WTC11 (cell line): ENCODE measurements at regions of chr2 and their contacts with region 1.

Region 1: GRCh38 chr2:16773080-16773713 is 107.6 kb upstream of the CYRIA start:
- DNase-seq: peak; percentile 45
- ATAC-seq: peak; percentile 76
- H3K4me3 Mint-ChIP-seq: no peak overlapping the region
- H3K27ac Mint-ChIP-seq: no peak overlapping the region
- H3K4me1 Mint-ChIP-seq: peaks cover 41% of the 10 kb centered on the region
- H3K27me3 Mint-ChIP-seq: no peaks in the 10 kb centered on the region
- CTCF ChIP-seq: peak; percentile 54; the same call in 1 of the 2 replicates

Region 2: DNA sequence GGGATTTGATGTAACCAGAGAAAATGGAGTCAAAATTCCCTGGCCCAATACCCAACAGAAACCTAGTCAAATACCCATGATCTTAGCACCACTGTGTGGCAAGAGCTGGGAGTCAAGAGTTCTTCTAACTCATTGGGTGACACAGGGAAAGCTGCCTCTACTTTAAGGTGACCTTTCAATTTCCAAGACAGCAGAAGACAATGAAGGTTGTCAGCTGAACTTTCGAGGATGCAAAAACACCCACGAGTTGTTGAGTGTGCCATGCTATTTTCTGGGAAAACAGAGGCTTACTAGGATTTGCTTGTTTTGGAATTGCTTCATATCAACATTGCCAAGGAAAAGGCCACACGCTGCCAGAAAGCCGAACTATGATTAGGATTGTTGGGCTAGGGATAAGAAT is 45.9 kb before region 1 on chr2:
- CTCF ChIA-PET with region 1: no interaction called
- POLR2A ChIA-PET with region 1: no interaction called
- DNase-seq: no peak
- ATAC-seq: no peak
- H3K4me3 Mint-ChIP-seq: no peak overlapping the region
- H3K27ac Mint-ChIP-seq: no peak overlapping the region
- H3K4me1 Mint-ChIP-seq: peaks cover 7% of the 10 kb centered on the region
- H3K27me3 Mint-ChIP-seq: no peaks in the 10 kb centered on the region
- CTCF ChIP-seq: no peak

Region 3: DNA sequence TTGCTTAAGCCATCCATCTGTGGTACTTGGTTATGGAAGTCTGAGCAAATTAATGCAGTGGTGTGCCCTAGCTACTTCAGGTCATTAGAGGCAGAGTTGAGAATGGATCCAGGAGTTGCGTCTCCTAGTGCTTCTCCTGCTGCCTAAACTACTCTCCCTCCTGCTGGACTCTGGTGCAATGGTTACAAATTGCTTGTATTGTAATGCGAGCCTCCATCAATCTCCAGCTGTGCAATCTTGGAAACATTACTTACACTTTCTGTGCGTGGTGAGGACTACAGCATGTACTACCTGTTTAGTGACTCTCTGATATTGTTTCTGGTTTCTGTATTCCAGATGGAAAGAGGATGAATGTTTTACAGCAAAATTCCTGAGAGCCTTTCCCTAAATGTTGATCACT is 11.5 kb after region 1 on chr2:
- CTCF ChIA-PET with region 1: interaction called, 10 read pairs
- POLR2A ChIA-PET with region 1: no interaction called
- DNase-seq: no peak
- ATAC-seq: peak; percentile 27; the same call in 1 of the 2 replicates
- H3K4me3 Mint-ChIP-seq: no peak overlapping the region
- H3K27ac Mint-ChIP-seq: no peak overlapping the region
- H3K4me1 Mint-ChIP-seq: peaks cover 20% of the 10 kb centered on the region
- H3K27me3 Mint-ChIP-seq: no peaks in the 10 kb centered on the region; the same call in 1 of the 2 replicates
- CTCF ChIP-seq: no peak

Region 4: DNA sequence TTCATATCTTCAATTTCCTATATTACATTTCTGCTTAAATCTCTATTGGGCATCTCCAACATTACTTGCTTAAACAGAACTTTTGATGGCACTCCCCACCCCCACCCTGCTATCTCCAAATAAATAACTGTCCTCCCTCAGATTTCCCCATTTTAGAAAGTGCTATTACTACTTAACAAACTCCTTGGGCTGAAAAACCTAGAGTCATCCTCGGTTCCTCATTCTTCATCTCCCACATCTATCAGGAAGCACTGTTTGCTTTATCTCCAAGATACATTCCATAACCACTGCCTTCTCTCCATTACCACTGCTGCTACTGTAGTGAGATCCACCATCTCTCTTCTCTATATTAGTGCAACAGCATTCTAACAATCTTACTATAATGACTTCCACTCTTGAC is 42.8 kb after region 1 on chr2:
- CTCF ChIA-PET with region 1: no interaction called
- POLR2A ChIA-PET with region 1: no interaction called
- DNase-seq: no peak
- ATAC-seq: no peak
- H3K4me3 Mint-ChIP-seq: no peak overlapping the region
- H3K27ac Mint-ChIP-seq: no peak overlapping the region
- H3K4me1 Mint-ChIP-seq: no peaks in the 10 kb centered on the region
- H3K27me3 Mint-ChIP-seq: no peaks in the 10 kb centered on the region
- CTCF ChIP-seq: no peak

Region 5: DNA sequence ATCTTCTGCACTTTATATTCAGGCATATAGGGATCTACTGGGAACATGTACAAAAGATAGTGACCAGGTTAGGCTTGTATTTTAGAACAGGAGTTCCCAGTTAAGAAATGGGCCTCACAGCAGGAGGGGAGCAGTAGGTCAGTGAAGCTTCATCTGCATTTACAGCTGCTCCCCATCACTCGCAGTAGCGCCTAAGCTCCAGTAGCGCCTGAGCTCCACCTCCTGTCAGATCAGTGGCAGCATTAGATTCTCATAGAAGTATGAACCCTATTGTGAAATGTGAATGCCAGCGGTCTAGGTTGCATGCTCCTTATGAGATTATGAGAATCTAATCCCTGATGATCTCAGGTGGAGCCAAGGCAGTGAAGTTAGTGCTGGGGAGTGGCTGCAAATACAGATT is 116.9 kb after region 1 on chr2:
- CTCF ChIA-PET with region 1: interaction called, 55 read pairs
- POLR2A ChIA-PET with region 1: no interaction called
- DNase-seq: peak; percentile 60
- ATAC-seq: peak; percentile 91
- H3K4me3 Mint-ChIP-seq: no peak overlapping the region
- H3K27ac Mint-ChIP-seq: no peak overlapping the region
- H3K4me1 Mint-ChIP-seq: peaks cover 9% of the 10 kb centered on the region; the same call in 1 of the 2 replicates
- H3K27me3 Mint-ChIP-seq: no peaks in the 10 kb centered on the region
- CTCF ChIP-seq: no peak

Region 6: GRCh38 chr2:16900405-16901025 is 127.3 kb after region 1 on chr2:
- CTCF ChIA-PET with region 1: interaction called, 13 read pairs
- POLR2A ChIA-PET with region 1: no interaction called
- DNase-seq: peak; percentile 69
- ATAC-seq: peak; percentile 95
- H3K4me3 Mint-ChIP-seq: no peak overlapping the region
- H3K27ac Mint-ChIP-seq: no peak overlapping the region
- H3K4me1 Mint-ChIP-seq: no peaks in the 10 kb centered on the region
- H3K27me3 Mint-ChIP-seq: no peaks in the 10 kb centered on the region
- CTCF ChIP-seq: peak; percentile 81

Region 7: DNA sequence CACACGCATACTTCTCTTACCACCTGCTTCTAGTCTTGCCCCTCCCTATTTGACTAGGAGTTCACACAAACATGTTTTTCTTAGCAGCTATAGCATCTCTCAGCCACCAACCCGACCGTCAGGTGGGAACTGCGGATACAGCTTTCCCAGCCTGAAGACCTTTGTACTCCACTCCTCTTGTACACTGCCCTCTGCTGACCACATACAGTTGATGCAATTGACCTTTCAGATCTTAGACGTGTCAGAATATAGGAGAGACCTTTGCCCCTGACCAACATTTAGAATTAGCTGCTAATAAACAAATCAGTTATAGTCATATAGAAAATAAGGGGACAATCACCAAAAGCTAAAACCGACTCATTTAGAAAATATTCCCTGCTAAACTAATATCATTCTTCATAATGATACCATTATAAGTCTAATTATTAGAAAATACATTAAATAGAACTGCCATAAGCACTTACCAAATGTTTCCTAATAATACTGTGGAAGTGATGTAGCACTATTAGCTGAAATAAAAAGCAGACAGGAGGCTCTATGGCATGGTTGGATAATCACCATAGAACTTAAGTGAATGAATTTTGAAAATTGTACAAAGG is 536.6 kb after region 1 on chr2:
- CTCF ChIA-PET with region 1: interaction called, 24 read pairs
- POLR2A ChIA-PET with region 1: no interaction called
- DNase-seq: peak; percentile 69
- ATAC-seq: peak; percentile 92
- H3K4me3 Mint-ChIP-seq: no peak overlapping the region
- H3K27ac Mint-ChIP-seq: no peak overlapping the region
- H3K4me1 Mint-ChIP-seq: peaks cover 28% of the 10 kb centered on the region
- H3K27me3 Mint-ChIP-seq: no peaks in the 10 kb centered on the region; the same call in 1 of the 2 replicates
- CTCF ChIP-seq: peak; percentile 68